ENCODE measurements at regions of chr17 and their contacts with region 1.

Region 1: DNA sequence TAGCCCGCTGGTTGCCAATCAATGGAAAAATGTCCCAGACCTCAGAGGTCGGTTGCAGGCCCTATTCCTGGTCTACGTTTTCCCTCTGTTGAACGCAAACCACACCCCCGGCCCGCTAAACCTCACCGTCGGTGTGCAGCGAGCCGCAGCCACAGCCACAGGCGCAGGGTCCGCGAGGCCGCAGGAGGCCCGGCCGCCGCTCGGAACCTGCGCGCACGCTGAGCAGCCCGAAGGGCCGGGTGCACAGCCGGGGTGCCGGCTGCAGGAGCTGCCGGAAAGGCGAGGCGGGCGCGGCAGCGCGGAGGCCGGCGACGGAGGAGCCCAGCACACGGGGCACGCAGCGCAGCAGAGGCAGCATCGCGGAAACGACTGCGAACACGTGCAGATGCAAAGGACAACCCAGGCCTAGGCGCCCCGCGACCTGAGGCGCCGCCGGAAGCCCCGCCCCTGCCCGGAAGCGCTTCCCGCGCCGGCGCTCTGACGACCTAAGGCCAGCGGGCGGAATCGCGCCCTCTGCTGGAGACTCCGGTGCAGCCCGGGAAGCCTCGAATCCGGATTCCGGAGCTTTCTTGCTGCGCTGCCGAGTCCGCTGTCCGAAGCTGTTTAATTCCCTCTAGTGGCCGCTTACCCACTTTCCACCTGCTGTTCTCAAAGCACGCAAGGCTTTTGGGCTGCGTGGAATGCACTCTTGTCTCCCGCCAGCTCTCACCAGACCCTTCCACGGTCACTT is at the start of gene C1QBP:
- DNase-seq: peak; percentile 88 to 92 (median 89)
- H3K4me3 ChIP-seq: peak within 1 kb of the TSS; percentile 78
- H3K4me3 Mint-ChIP-seq: peak within 1 kb of the TSS; percentile 82 to 93 (median 87)
- H3K27ac ChIP-seq: peak within 1 kb of the TSS; percentile 72
- H3K27ac Mint-ChIP-seq: peak within 1 kb of the TSS; percentile 76 to 97 (median 94)
- H3K4me1 ChIP-seq: peaks cover 29% of the 10 kb centered on the region
- H3K4me1 Mint-ChIP-seq: peaks cover 33 to 43% (median 37%) of the 10 kb centered on the region in 3 donors
- H3K27me3 ChIP-seq: no peaks in the 10 kb centered on the region
- H3K27me3 Mint-ChIP-seq: no peaks in the 10 kb centered on the region
- total RNA-seq, gene C1QBP: 544 to 565 TPM

Region 2: DNA sequence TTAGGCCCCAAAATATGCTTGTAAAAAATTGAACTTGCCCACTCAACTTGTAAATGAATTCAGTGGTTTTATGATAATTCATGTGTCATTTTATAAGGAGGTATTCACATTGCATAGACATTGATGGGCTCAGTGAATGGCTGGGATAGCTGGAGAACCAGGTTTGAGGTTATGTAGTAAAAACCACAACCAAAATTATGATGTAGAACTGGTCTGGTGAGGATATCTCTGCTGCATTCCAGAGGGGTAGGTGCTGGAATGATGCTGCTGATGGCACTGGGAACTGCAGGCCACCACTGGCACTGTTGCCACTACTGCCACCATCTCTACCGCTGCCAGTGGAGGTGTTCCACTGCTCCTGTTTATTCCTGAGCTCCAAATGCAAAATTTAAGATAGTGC is 178.3 kb before region 1 on chr17:
- CTCF ChIA-PET with region 1: no interaction called
- POLR2A ChIA-PET with region 1: no interaction called
- DNase-seq: no peak
- H3K4me3 ChIP-seq: no peak overlapping the region
- H3K4me3 Mint-ChIP-seq: no peak overlapping the region
- H3K27ac ChIP-seq: no peak overlapping the region
- H3K27ac Mint-ChIP-seq: no peak overlapping the region
- H3K4me1 ChIP-seq: no peaks in the 10 kb centered on the region
- H3K4me1 Mint-ChIP-seq: peaks cover 0 to under 1% (median under 1%) of the 10 kb centered on the region in 3 donors
- H3K27me3 ChIP-seq: no peaks in the 10 kb centered on the region
- H3K27me3 Mint-ChIP-seq: no peaks in the 10 kb centered on the region

Region 3: DNA sequence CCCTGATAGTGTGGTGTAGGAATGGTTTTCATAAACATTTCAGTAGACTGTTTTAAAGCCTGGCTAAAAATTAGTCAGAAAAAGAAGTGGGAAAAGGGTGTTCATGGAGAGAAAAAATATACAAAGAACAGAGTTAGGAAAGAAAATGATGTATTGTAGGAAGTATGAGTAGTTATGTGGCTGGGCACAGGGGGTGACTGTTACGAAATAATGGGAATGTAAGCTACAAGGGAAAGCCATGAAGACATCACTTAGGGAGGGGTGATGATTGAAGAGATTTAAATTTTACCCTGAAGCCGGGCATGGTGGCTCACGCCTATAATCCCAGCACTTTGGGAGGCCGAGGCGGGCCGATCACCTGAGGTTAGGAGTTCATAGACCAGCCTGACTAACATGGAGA is 74.7 kb before region 1 on chr17:
- CTCF ChIA-PET with region 1: no interaction called
- POLR2A ChIA-PET with region 1: no interaction called
- DNase-seq: no peak
- H3K4me3 ChIP-seq: no peak overlapping the region
- H3K4me3 Mint-ChIP-seq: no peak overlapping the region
- H3K27ac ChIP-seq: no peak overlapping the region
- H3K27ac Mint-ChIP-seq: peak overlapping the region in 3 of 8 donors; percentile 9 to 43 (median 12)
- H3K4me1 ChIP-seq: no peaks in the 10 kb centered on the region
- H3K4me1 Mint-ChIP-seq: no peaks in the 10 kb centered on the region
- H3K27me3 ChIP-seq: no peaks in the 10 kb centered on the region
- H3K27me3 Mint-ChIP-seq: no peaks in the 10 kb centered on the region

Region 4: DNA sequence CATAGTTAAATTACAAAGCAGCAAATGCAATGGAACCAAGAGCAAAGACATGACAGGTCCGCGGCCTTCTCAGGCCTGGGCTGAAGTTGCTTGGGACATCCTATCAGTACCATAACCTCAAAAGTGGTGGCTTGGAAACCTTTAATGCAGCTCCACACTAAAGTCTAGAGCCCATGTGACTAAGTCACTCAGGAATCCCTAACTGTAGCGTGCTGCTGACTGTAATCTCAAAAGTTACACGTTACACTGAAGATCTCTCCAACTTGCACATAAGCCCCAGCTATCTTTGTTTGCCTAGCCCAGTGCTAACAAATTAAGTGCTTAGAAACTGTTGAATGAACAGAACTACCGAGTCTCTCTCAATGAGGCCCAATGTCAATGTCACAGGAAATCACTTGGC is 47.2 kb before region 1 on chr17:
- CTCF ChIA-PET with region 1: interaction called, 3 read pairs
- POLR2A ChIA-PET with region 1: interaction called, 10 read pairs
- DNase-seq: no peak
- H3K4me3 ChIP-seq: no peak overlapping the region
- H3K4me3 Mint-ChIP-seq: no peak overlapping the region
- H3K27ac ChIP-seq: no peak overlapping the region
- H3K27ac Mint-ChIP-seq: peak overlapping the region in 4 of 8 donors; percentile 2 to 37 (median 14)
- H3K4me1 ChIP-seq: peaks cover 9% of the 10 kb centered on the region
- H3K4me1 Mint-ChIP-seq: peaks cover 11 to 17% (median 11%) of the 10 kb centered on the region in 3 donors
- H3K27me3 ChIP-seq: no peaks in the 10 kb centered on the region
- H3K27me3 Mint-ChIP-seq: no peaks in the 10 kb centered on the region

Region 5: GRCh38 chr17:5419356-5419958 is 19.4 kb before region 1 on chr17 and contains the start of gene NUP88:
- CTCF ChIA-PET with region 1: interaction called, 31 read pairs
- POLR2A ChIA-PET with region 1: interaction called, 16 read pairs
- DNase-seq: peak; percentile 93 to 98 (median 96)
- H3K4me3 ChIP-seq: peak within 1 kb of the TSS; percentile 96
- H3K4me3 Mint-ChIP-seq: peak within 1 kb of the TSS; percentile 92 to 100 (median 97)
- H3K27ac ChIP-seq: peak within 1 kb of the TSS; percentile 95
- H3K27ac Mint-ChIP-seq: peak within 1 kb of the TSS; percentile 94 to 99 (median 98)
- H3K4me1 ChIP-seq: peaks cover 41% of the 10 kb centered on the region
- H3K4me1 Mint-ChIP-seq: peaks cover 29 to 63% (median 52%) of the 10 kb centered on the region in 3 donors
- H3K27me3 ChIP-seq: no peaks in the 10 kb centered on the region
- H3K27me3 Mint-ChIP-seq: peaks cover 0 to 4% of the 10 kb centered on the region in 2 donors
- total RNA-seq, gene NUP88: 131 to 144 TPM

Region 6: GRCh38 chr17:5508810-5509209 is 69.9 kb after region 1 on chr17:
- CTCF ChIA-PET with region 1: no interaction called
- POLR2A ChIA-PET with region 1: no interaction called
- DNase-seq: no peak
- H3K4me3 ChIP-seq: no peak overlapping the region
- H3K4me3 Mint-ChIP-seq: no peak overlapping the region
- H3K27ac ChIP-seq: no peak overlapping the region
- H3K27ac Mint-ChIP-seq: peak overlapping the region in 3 of 8 donors; percentile 43 to 79 (median 45)
- H3K4me1 ChIP-seq: peaks cover 25% of the 10 kb centered on the region
- H3K4me1 Mint-ChIP-seq: peaks cover 23 to 30% (median 25%) of the 10 kb centered on the region in 3 donors
- H3K27me3 ChIP-seq: no peaks in the 10 kb centered on the region
- H3K27me3 Mint-ChIP-seq: no peaks in the 10 kb centered on the region

Measured in CD8-positive, alpha-beta memory T cell (primary cell).